AG04449 (cell line): ENCODE measurements at regions of chr15 and their contacts with region 1.

Region 1: GRCh38 chr15:81155375-81156218 is 21.5 kb downstream of the CFAP161 start:
- DNase-seq: no peak
- H3K4me3 ChIP-seq: no peak overlapping the region
- CTCF ChIP-seq: peak; percentile 31

Region 2: DNA sequence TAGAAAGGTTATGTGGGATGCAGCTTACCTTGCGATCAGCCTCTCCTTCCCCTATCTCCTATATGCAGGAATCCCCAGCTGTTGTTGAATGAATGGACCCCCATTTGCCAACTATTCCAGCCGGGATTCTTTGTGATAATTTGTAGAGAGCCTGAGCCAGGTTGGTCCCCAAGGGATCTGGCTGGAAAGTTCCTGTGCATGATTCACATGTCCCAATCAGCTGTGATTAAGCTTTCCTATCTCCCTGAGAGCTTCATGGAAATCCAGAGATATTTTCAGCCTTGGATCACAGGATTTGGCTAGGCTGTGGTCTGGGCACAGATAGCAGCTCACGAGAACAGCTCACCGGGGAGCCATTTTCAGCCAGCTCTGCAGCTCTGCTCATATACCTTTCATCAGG is 674.7 kb before region 1 on chr15:
- CTCF ChIA-PET with region 1: no interaction called
- POLR2A ChIA-PET with region 1: no interaction called
- DNase-seq: peak; percentile 93
- H3K4me3 ChIP-seq: peak overlapping the region; percentile 31
- CTCF ChIP-seq: no peak

Region 3: DNA sequence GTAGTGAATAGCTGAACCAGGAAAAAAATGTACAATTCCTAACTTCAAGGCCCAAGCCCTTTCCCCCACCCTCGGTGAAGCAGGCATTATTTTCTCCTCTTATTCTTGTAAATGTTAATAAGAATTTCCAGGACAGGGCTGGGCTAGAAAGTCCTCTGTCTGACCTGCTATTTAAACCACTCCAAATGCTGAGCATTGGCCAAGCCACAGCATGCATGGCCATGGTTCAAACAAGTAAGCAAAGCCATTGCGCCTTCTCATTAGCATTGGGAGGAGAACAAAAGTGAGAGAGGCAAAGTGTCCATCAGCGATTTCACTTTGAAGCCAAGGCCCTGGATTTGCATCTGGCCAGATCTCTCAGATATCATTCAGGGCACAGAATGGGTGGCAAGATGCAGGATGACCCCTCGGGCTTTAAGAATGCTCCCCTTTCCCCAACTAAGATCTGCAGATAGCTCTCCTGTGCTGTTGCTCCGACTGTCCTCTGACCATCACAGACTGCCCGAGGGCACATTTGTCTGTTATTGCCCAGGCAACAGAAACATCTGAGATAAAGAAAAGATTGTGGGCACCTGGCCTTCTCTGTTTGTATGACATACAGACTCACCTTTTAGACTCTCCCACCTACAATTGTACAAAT is 330.1 kb before region 1 on chr15:
- CTCF ChIA-PET with region 1: no interaction called
- POLR2A ChIA-PET with region 1: no interaction called
- DNase-seq: no peak
- H3K4me3 ChIP-seq: no peak overlapping the region
- CTCF ChIP-seq: no peak

Region 4: GRCh38 chr15:81106560-81106959 is 49.0 kb before region 1 on chr15:
- CTCF ChIA-PET with region 1: interaction called, 80 read pairs
- POLR2A ChIA-PET with region 1: no interaction called
- DNase-seq: peak; percentile 42
- H3K4me3 ChIP-seq: no peak overlapping the region
- CTCF ChIP-seq: peak; percentile 65

Region 5: GRCh38 chr15:81133782-81134461 is 21.7 kb before region 1 on chr15 and contains the start of gene CFAP161:
- CTCF ChIA-PET with region 1: interaction called, 10 read pairs
- POLR2A ChIA-PET with region 1: no interaction called
- DNase-seq: no peak
- H3K4me3 ChIP-seq: peak within 1 kb of the TSS; percentile 50
- CTCF ChIP-seq: no peak

Region 6: GRCh38 chr15:81170511-81170910 is 14.9 kb after region 1 on chr15:
- CTCF ChIA-PET with region 1: interaction called, 27 read pairs
- POLR2A ChIA-PET with region 1: no interaction called
- DNase-seq: no peak
- H3K4me3 ChIP-seq: no peak overlapping the region
- CTCF ChIP-seq: no peak

Region 7: DNA sequence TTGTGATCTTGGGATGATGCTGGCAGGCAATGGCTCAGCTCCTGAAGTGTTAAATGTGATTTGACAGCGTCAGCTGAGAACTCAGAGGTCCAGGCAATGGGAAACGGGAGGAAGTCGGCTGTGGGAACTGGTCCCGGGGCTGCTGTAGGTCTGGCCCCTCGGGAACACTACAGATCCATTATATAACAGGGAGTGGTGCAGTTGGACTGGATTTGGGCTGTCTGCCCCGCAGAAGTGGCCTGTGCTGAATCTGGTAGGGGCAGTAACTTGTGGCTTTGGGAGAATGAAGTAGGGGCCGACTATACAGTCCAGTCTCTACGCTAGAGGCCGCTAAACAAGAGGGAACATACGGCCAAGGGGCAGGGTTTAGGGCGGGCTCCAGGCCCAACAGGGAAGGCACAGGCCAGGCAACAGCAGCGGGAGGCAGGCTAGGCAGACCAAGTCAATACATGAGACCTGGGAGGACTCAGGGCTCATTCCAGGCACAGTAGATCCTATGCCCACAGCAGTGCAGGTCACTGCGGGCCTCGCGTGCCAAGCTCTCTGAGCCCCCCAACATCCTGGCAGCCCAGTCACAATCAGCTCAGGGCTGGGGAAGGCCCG is 20.8 kb after region 1 on chr15:
- CTCF ChIA-PET with region 1: interaction called, 27 read pairs
- POLR2A ChIA-PET with region 1: no interaction called
- DNase-seq: no peak
- H3K4me3 ChIP-seq: no peak overlapping the region
- CTCF ChIP-seq: no peak

Region 8: GRCh38 chr15:81234819-81235218 is 79.2 kb after region 1 on chr15:
- CTCF ChIA-PET with region 1: interaction called, 11 read pairs
- POLR2A ChIA-PET with region 1: no interaction called
- DNase-seq: no peak
- H3K4me3 ChIP-seq: no peak overlapping the region
- CTCF ChIP-seq: no peak

Region 9: DNA sequence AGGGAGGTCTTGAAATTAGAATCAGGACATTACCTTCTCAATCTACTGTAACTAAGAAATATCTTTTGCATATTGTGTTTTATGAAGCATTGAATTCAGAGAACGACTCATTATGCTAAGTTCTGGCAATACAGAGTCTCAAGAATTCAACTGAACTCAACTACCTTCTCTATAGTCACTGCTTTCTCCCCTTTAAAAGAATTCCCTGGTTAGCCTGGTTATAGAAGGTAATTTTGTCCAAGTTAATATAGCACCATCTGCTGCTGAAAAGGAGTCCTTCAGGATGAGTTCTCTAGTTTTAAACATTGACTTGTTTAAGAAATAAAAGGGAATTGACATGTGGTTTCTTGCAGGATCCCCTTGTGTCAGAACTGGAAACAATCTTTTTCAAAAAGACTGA is 101.3 kb after region 1 on chr15:
- CTCF ChIA-PET with region 1: interaction called, 733 read pairs
- POLR2A ChIA-PET with region 1: no interaction called
- DNase-seq: no peak
- H3K4me3 ChIP-seq: no peak overlapping the region
- CTCF ChIP-seq: peak; percentile 29